Activated CD4-positive, alpha-beta T cell treated with anti-CD3 and anti-CD28 coated beads for 36 hours (primary cell): ENCODE measurements at regions of chr2 and their contacts with region 1.

Region 1: DNA sequence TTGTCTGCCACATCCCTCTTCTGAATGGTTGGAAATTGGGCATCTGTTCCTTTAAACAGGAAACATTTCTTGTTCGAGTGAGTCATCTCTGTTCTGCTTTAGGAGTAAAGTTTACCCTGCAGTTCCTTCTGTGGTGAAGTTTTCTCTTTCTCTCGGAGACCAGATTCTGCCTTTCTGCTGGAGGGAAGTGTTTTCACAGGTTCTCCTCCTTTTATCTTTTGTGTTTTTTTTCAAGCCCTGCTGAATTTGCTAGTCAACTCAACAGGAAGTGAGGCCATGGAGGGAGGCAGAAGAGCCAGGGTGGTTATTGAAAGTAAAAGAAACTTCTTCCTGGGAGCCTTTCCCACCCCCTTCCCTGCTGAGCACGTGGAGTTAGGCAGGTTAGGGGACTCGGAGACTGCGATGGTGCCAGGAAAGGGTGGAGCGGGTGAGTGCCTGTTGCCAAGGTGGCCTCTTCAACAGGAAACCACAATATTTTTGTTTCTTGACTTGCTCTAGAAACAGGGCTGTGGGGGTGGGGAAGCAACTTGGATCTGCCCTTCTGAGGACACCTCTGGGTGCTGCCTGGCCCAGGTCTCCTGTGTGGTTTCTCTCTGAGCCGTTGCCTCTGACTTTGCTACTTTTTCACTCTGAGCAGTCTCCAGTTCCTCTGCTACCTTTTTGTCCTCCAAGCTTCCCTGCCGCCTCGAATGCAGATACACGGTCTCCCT is 2.2 kb upstream of the CASP8 start:
- DNase-seq: peak; percentile 96
- ATAC-seq: peak; percentile 66
- H3K4me3 Mint-ChIP-seq: peak overlapping the region; percentile 79
- H3K27ac Mint-ChIP-seq: peak overlapping the region; percentile 98
- H3K4me1 Mint-ChIP-seq: peaks cover 76% of the 10 kb centered on the region
- H3K27me3 Mint-ChIP-seq: no peaks in the 10 kb centered on the region

Region 2: GRCh38 chr2:200454927-200455801 is 802.9 kb before region 1 on chr2:
- CTCF ChIA-PET with region 1: no interaction called
- POLR2A ChIA-PET with region 1: no interaction called
- intact Hi-C with region 1: loop called in 1 of 2 experiments (anchors 5 kb)
- DNase-seq: peak; percentile 41
- ATAC-seq: peak; percentile 78
- H3K4me3 Mint-ChIP-seq: peak overlapping the region; percentile 10
- H3K27ac Mint-ChIP-seq: peak overlapping the region; percentile 96
- H3K4me1 Mint-ChIP-seq: peaks cover 33% of the 10 kb centered on the region
- H3K27me3 Mint-ChIP-seq: no peaks in the 10 kb centered on the region

Region 3: GRCh38 chr2:200888704-200889625 is 369.1 kb before region 1 on chr2 and contains the starts of genes NIF3L1 and PPIL3:
- CTCF ChIA-PET with region 1: no interaction called
- POLR2A ChIA-PET with region 1: interaction called, 4 read pairs
- intact Hi-C with region 1: loop called in 1 of 2 experiments (anchors 1 kb)
- DNase-seq: peak; percentile 99
- ATAC-seq: peak; percentile 83
- H3K4me3 Mint-ChIP-seq: peak within 1 kb of the TSS; percentile 98
- H3K27ac Mint-ChIP-seq: peak within 1 kb of the TSS; percentile 100
- H3K4me1 Mint-ChIP-seq: peaks cover 46% of the 10 kb centered on the region
- H3K27me3 Mint-ChIP-seq: no peaks in the 10 kb centered on the region
- total RNA-seq, gene NIF3L1: 37.0 to 47.7 TPM
- total RNA-seq, gene PPIL3: 52.6 to 53.0 TPM

Region 4: DNA sequence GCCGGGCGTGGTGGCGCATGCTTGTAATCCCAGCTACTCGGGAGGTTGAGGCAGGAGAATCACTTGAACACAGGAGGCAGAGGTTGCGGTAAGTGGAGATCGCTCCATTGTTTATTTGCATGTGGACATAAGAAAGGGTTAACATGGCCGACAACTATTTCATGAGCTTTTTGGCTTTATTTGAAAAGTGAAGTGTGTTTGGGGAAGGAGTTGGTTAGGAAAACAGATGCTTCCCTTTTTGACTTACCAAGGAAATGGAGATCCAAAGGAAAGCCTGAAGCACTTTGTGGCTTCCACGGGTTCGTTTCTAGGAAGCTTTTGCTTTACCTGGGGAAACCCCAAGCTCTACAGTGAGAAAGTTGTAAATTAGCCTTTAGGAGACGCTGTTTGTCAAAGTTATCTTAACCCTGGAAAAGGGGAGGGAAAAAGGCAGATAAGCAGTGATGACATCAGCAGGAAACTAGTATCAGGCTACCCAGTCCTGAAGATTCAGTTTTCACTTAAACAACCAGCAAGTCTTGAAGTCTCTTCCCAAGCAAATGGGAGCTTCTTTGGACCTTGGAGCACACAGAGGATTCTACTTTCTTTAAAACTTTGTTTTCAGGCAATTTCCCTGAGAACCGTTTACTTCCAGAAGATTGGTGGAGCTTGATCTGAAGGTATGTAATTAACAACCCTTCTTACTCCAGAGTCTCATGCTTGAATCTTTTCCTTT is 75.3 kb before region 1 on chr2 and contains the start of gene CASP10:
- CTCF ChIA-PET with region 1: interaction called, 9 read pairs
- POLR2A ChIA-PET with region 1: interaction called, 3 read pairs
- intact Hi-C with region 1: loop called (anchors 1 to 2 kb)
- DNase-seq: no peak
- ATAC-seq: peak; percentile 66
- H3K4me3 Mint-ChIP-seq: peak within 1 kb of the TSS; percentile 86
- H3K27ac Mint-ChIP-seq: peak within 1 kb of the TSS; percentile 96
- H3K4me1 Mint-ChIP-seq: peaks cover 43% of the 10 kb centered on the region
- H3K27me3 Mint-ChIP-seq: no peaks in the 10 kb centered on the region
- total RNA-seq, gene CASP10: 12.2 to 16.8 TPM

Region 5: GRCh38 chr2:201414099-201415023 is 156.2 kb after region 1 on chr2:
- CTCF ChIA-PET with region 1: interaction called, 3 read pairs
- POLR2A ChIA-PET with region 1: no interaction called
- intact Hi-C with region 1: loop called in 1 of 2 experiments (anchors 5 kb)
- DNase-seq: no peak
- ATAC-seq: peak; percentile 82
- H3K4me3 Mint-ChIP-seq: no peak overlapping the region
- H3K27ac Mint-ChIP-seq: no peak overlapping the region
- H3K4me1 Mint-ChIP-seq: peaks cover 20% of the 10 kb centered on the region
- H3K27me3 Mint-ChIP-seq: no peaks in the 10 kb centered on the region

Region 6: GRCh38 chr2:201532686-201533304 is 274.7 kb after region 1 on chr2:
- CTCF ChIA-PET with region 1: no interaction called
- POLR2A ChIA-PET with region 1: no interaction called
- intact Hi-C with region 1: loop called in 1 of 2 experiments (anchors 2 kb)
- DNase-seq: peak; percentile 31
- ATAC-seq: peak; percentile 97
- H3K4me3 Mint-ChIP-seq: no peak overlapping the region
- H3K27ac Mint-ChIP-seq: peak overlapping the region; percentile 64
- H3K4me1 Mint-ChIP-seq: peaks cover 18% of the 10 kb centered on the region
- H3K27me3 Mint-ChIP-seq: no peaks in the 10 kb centered on the region